AG04450 (cell line): ENCODE measurements at regions of chr2 and their contacts with region 1.

Region 1: GRCh38 chr2:182077451-182078142 is 91.9 kb downstream of the PPP1R1C start:
- DNase-seq: peak; percentile 85
- H3K4me3 ChIP-seq: no peak overlapping the region
- H3K27ac ChIP-seq: no peak overlapping the region
- H3K27me3 ChIP-seq: no peaks in the 10 kb centered on the region
- CTCF ChIP-seq: peak; percentile 75

Region 2: GRCh38 chr2:181742922-181743722 is 334.5 kb before region 1 on chr2:
- CTCF ChIA-PET with region 1: interaction called, 43 read pairs
- POLR2A ChIA-PET with region 1: no interaction called
- DNase-seq: peak; percentile 11
- H3K4me3 ChIP-seq: no peak overlapping the region
- H3K27ac ChIP-seq: no peak overlapping the region
- H3K27me3 ChIP-seq: no peaks in the 10 kb centered on the region
- CTCF ChIP-seq: peak; percentile 66

Region 3: GRCh38 chr2:181904022-181904632 is 173.5 kb before region 1 on chr2:
- CTCF ChIA-PET with region 1: interaction called, 21 read pairs
- POLR2A ChIA-PET with region 1: no interaction called
- DNase-seq: no peak
- H3K4me3 ChIP-seq: no peak overlapping the region; the same call in 1 of the 2 replicates
- H3K27ac ChIP-seq: no peak overlapping the region
- H3K27me3 ChIP-seq: no peaks in the 10 kb centered on the region
- CTCF ChIP-seq: peak; percentile 67

Region 4: DNA sequence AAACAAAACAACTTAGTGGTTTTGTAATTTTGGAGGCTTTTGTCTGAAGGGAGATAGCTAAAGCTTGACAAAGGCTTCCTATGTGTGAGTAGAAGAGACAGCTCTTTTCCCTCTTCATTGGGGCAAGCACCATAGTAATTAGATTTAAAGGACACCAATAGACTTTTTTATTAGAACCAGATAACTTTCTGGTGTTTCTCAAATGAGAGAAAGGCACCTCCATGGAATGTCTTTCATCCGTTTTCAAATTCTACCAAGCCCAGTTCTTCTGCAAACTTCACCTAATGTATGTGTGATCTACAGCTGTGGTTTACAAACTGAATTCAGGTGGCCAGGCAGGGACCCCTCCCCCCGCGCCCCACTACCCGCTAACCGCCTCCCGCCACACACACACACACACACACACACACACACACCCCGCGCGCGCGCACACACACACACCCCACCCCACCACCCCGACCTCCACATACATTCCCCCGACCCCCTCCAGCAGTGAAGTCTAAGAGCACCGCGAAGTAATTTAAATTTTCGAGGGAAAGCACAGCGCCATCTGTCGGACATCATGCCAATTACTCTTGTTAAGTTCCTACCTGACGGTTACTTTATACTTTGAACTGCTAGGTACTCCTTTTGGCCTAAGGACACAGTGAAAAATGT is 123.6 kb before region 1 on chr2:
- CTCF ChIA-PET with region 1: interaction called, 15 read pairs
- POLR2A ChIA-PET with region 1: no interaction called
- DNase-seq: no peak
- H3K4me3 ChIP-seq: no peak overlapping the region
- H3K27ac ChIP-seq: no peak overlapping the region
- H3K27me3 ChIP-seq: no peaks in the 10 kb centered on the region
- CTCF ChIP-seq: peak; percentile 65

Region 5: DNA sequence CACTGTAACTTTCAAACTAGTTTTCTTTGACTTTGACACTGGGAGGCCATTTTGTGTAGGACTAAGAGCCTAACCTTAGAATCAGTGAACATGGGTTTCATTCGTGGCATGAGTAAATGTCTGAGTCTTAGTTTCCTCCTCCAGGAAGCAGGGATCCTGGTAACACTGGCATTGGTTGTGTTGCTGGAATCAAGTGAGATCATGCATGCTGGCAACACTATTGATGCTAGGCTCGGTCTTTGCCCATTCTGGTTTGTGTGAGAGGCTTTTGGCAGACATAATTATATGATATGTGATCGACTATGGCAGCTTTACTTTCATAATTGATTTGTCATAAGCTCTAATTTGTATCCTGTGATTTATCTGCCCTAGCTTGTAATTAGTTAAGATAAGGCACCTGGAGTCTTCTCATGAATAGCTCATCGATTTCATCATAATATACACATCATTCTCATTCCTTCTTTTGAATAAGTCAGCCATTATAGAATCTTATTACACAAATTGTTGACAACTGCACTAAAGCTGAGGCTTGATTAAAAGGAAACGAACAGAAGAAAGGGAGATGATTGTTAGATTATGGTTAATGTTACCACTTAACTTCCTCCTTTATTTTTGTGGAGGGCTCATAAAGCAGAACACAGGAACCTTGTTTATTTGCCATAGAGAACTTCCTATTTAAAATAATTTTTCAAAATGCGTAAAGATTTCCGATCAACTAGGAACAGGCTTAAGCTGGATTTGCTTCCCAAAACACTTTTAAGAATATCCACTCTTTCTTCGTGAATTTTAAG is 79.4 kb before region 1 on chr2:
- CTCF ChIA-PET with region 1: no interaction called
- POLR2A ChIA-PET with region 1: no interaction called
- DNase-seq: no peak
- H3K4me3 ChIP-seq: no peak overlapping the region
- H3K27ac ChIP-seq: no peak overlapping the region
- H3K27me3 ChIP-seq: no peaks in the 10 kb centered on the region
- CTCF ChIP-seq: no peak

Region 6: DNA sequence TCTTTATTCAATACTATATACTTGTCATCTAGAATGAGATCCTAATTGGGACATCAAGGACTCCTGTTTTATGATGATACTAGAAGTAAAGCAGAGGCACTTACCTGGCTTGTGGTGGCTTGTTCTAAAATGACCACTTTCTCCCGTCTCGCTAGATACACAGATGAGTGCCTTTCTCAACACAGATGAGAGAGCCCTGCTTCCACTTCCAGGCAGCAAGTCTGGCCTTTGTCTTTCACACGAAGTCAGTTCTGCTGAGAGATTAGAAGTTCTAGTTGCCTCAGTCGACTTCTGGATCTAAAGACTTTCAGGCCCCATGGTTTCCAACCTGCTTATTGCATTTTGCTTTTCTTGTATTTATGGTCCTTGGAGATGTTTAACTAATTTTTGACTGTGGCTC is 21.6 kb before region 1 on chr2:
- CTCF ChIA-PET with region 1: no interaction called
- POLR2A ChIA-PET with region 1: no interaction called
- DNase-seq: no peak
- H3K4me3 ChIP-seq: no peak overlapping the region
- H3K27ac ChIP-seq: no peak overlapping the region
- H3K27me3 ChIP-seq: no peaks in the 10 kb centered on the region
- CTCF ChIP-seq: no peak

Region 7: GRCh38 chr2:182066400-182067087 is 11.1 kb before region 1 on chr2:
- CTCF ChIA-PET with region 1: interaction called, 12 read pairs
- POLR2A ChIA-PET with region 1: interaction called, 3 read pairs
- DNase-seq: peak; percentile 86
- H3K4me3 ChIP-seq: no peak overlapping the region
- H3K27ac ChIP-seq: no peak overlapping the region
- H3K27me3 ChIP-seq: no peaks in the 10 kb centered on the region
- CTCF ChIP-seq: no peak

Region 8: DNA sequence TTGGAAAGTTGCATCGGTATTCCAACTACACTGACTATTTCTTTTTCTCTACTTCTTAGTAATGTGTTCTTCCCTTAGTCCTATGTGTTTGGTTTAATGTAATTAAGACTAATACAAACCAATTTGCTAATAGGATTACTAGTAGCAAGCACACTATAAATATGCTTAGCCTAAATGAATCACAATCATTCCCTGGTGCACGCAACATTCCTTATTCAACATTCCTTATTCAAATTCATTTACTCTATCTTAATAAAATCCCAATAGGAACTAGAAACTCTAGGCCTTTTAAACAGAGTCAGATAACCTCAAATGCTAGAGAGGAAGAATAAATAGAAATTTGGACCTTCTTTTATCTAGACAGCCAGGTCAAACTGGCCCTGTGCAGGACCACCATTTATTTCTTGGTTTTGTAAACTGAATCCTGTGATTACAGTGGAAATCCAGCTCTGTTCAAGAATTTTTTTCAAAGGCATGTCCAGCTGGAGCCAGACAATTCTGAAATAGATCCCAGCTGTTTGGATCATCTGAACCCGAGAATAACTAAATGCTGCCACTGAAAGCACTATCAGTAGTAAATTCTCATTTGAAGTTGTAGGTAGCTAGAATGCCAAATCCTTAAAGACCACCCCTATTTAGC is 11.2 kb after region 1 on chr2:
- CTCF ChIA-PET with region 1: interaction called, 19 read pairs
- POLR2A ChIA-PET with region 1: interaction called, 3 read pairs
- DNase-seq: no peak
- H3K4me3 ChIP-seq: no peak overlapping the region
- H3K27ac ChIP-seq: no peak overlapping the region
- H3K27me3 ChIP-seq: no peaks in the 10 kb centered on the region
- CTCF ChIP-seq: no peak

Region 9: GRCh38 chr2:182132605-182133004 is 55.0 kb after region 1 on chr2:
- CTCF ChIA-PET with region 1: no interaction called
- POLR2A ChIA-PET with region 1: no interaction called
- DNase-seq: no peak
- H3K4me3 ChIP-seq: no peak overlapping the region
- H3K27ac ChIP-seq: no peak overlapping the region
- H3K27me3 ChIP-seq: no peaks in the 10 kb centered on the region
- CTCF ChIP-seq: peak; percentile 68

Region 10: DNA sequence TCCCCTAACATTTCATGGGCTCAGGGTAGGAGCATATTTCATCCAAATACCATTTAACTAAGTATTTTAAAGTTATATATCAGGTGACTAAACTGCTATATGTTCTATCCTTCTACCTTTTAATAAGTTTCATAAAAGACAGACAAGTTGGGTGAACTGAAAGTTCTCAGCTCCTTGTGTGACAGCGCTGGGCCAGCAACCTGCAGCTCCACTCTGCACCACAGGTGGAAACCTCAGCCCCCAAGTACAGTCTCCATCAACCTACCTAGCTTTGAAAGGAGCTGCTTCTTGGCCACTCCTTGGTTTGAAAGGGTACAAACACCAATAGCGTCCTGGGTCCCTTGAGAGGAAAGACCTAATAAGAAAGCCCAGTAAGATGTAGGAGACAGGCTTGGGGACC is 171.3 kb after region 1 on chr2:
- CTCF ChIA-PET with region 1: no interaction called
- POLR2A ChIA-PET with region 1: no interaction called
- DNase-seq: no peak
- H3K4me3 ChIP-seq: no peak overlapping the region
- H3K27ac ChIP-seq: no peak overlapping the region
- H3K27me3 ChIP-seq: no peaks in the 10 kb centered on the region
- CTCF ChIP-seq: no peak